Activated CD4-positive, alpha-beta memory T cell treated with anti-CD3 and anti-CD28 coated beads for 36 hours (primary cell): ENCODE measurements at regions of chr19 and their contacts with region 1.

Region 1: GRCh38 chr19:10797541-10798256 is 38.3 kb downstream of the TMED1 start:
- DNase-seq: peak; percentile 98
- H3K4me3 Mint-ChIP-seq: peak overlapping the region; percentile 76
- H3K27ac Mint-ChIP-seq: peak overlapping the region; percentile 99
- H3K4me1 Mint-ChIP-seq: peaks cover 32% of the 10 kb centered on the region
- H3K27me3 Mint-ChIP-seq: no peaks in the 10 kb centered on the region

Region 2: DNA sequence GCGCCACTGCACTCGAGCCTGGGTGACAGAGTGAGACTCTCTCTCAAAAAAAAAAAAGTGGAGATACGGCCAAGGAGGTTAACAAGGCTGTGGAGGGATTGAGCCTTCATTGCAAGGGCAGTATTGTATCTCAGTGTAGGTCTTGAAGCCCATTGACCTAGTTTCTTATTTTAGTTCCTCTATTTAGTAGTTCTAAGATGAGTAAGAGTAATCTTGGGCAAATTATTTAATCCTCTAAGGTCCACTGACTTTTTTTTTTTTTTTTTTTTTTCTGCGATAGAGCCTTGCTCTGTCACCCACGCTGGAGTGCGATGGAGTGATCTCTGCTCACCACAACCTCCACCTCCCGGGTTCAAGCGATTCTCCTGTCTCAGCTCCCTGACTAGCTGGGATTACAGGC is 157.9 kb before region 1 on chr19:
- CTCF ChIA-PET with region 1: no interaction called
- POLR2A ChIA-PET with region 1: no interaction called
- intact Hi-C with region 1: no loop called
- DNase-seq: no peak
- H3K4me3 Mint-ChIP-seq: no peak overlapping the region
- H3K27ac Mint-ChIP-seq: peak overlapping the region; percentile 4
- H3K4me1 Mint-ChIP-seq: peaks cover 10% of the 10 kb centered on the region
- H3K27me3 Mint-ChIP-seq: no peaks in the 10 kb centered on the region

Region 3: DNA sequence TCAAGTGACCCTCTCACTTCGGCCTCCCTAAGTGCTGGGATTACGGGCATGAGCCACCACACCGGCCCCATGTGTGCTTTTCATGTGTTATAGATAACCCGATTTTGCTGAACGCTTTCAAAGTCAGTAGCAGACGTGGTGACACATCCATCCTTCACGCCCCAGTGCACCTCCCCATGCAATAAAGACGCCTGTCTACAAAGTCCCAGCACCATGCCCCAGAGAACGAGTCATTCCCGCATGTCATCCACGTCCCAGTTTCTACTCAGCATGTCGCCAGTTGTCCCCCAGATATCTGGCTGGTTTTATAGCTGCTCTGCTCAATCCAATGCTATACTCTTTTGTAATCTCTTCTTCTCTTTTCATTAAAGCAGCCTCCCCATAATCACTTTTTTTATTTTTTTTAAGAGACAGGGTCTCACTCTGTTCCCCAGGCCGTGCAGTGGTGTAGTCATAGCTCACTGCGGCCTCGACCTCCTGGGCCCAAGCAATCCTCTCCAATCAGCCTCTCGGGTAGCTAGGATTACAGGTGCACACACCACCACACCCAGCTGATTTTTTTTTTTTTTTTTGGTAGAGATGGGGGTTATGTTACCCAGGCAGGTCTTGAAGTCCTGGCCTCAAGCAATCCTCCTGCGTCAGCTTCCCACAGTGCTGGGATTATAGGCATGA is 37.3 kb before region 1 on chr19:
- CTCF ChIA-PET with region 1: interaction called, 3 read pairs
- POLR2A ChIA-PET with region 1: no interaction called
- intact Hi-C with region 1: loop called (anchors 1 kb)
- DNase-seq: peak; percentile 71
- H3K4me3 Mint-ChIP-seq: peak overlapping the region; percentile 71
- H3K27ac Mint-ChIP-seq: peak overlapping the region; percentile 86
- H3K4me1 Mint-ChIP-seq: peaks cover 83% of the 10 kb centered on the region
- H3K27me3 Mint-ChIP-seq: no peaks in the 10 kb centered on the region

Region 4: DNA sequence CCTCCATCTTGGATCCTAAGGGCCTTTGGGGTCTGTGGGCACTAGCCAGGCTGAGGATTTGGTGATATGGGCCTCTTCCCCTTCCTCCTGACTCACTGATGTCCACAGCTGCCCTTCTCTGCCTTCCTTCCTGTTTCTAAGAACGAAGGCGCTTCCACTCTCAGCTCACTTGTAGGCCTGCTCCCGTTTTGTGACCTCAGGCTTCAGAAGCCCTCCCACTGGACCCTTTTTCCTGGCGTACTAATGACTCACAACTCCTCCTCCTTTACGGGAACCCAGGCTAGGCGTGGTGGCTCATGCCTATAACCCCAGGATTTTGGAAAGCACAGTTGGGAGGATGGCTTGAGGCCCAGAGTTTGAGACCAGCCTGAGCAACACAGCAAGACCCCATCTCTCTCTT is 17.3 kb before region 1 on chr19:
- CTCF ChIA-PET with region 1: no interaction called
- POLR2A ChIA-PET with region 1: no interaction called
- intact Hi-C with region 1: no loop called
- DNase-seq: no peak
- H3K4me3 Mint-ChIP-seq: no peak overlapping the region
- H3K27ac Mint-ChIP-seq: peak overlapping the region; percentile 62
- H3K4me1 Mint-ChIP-seq: no peaks in the 10 kb centered on the region
- H3K27me3 Mint-ChIP-seq: no peaks in the 10 kb centered on the region

Region 5: DNA sequence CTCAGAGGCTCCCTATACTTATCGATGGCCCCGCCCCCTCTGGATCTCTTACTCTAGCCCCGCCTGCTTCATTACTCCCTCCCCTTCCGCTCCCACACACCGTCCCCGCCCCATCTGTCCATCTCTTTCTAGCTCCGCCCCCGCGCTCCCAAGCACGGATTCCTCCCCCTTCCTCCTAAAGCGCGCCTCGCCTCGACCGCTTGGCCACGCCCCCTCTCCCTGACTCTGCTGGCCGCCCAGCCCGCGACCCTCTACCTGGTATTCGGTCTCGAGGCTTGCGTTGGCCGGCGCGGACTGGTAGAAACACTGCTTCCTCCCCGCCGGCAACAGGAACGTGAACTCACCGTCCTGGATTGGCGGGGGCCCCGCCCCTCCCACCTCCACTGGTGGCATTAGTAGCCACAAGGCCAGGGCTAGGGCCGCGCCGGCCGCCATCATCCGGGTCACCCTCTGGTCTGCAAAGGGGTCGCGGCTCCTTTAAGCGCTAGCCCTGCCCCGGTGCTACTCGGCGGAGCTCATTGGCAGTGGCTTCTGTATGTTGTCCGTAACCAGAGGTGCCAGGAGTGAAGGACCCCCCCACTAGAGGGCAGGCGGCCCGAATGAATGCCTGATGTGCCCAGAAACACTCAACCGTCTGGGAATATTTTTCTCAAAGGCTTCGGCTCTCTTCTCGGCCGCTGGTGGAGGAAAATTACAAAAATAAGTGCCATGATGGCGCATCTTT is 38.2 kb after region 1 on chr19 and contains the start of gene TMED1:
- CTCF ChIA-PET with region 1: no interaction called
- POLR2A ChIA-PET with region 1: interaction called, 3 read pairs
- intact Hi-C with region 1: loop called (anchors 1 kb)
- DNase-seq: peak; percentile 98
- H3K4me3 Mint-ChIP-seq: peak within 1 kb of the TSS; percentile 94
- H3K27ac Mint-ChIP-seq: peak within 1 kb of the TSS; percentile 99
- H3K4me1 Mint-ChIP-seq: peaks cover 15% of the 10 kb centered on the region
- H3K27me3 Mint-ChIP-seq: no peaks in the 10 kb centered on the region
- total RNA-seq, gene TMED1: 18.8 to 19.1 TPM

Region 6: DNA sequence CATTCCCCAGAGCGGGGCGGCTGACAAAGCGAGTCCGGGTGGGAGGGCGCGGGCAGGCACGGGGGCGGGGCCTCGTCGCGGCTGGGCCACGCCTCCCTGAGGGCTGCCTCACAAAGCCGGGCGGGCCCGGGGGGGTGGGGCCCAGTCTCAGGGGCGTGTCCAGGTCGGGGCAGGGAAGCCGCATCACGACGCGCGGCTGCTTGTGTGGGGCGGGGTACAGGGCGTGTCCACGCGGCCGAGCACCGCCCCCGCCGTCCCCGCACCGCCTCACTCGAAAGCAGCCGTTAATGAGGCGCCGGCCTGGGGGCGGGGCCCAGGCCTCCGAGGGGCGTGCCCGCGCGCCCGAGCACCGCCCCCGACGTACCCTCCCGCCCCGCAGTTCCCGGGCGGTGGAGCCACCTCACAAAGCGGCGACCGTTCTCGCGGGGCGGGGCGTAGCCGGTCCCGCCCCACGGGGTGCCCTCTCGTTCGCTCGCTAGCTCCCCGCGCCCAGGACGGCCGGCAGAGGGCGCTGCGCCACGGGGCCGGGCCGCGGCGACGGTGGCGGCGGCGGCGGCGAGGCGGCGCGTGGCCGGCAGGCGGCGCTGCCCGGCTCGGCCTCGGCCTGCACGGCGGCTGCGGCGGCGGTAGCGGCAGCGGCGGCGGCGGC is 73.4 kb after region 1 on chr19 and contains the start of gene CARM1:
- CTCF ChIA-PET with region 1: no interaction called
- POLR2A ChIA-PET with region 1: no interaction called
- intact Hi-C with region 1: loop called (anchors 5 kb)
- DNase-seq: peak; percentile 99
- H3K4me3 Mint-ChIP-seq: peak within 1 kb of the TSS; percentile 79
- H3K27ac Mint-ChIP-seq: peak within 1 kb of the TSS; percentile 96
- H3K4me1 Mint-ChIP-seq: peaks cover 25% of the 10 kb centered on the region
- H3K27me3 Mint-ChIP-seq: no peaks in the 10 kb centered on the region
- total RNA-seq, gene CARM1: 75.0 to 78.3 TPM